ENCODE measurements at regions of chr14 and their contacts with region 1.

Region 1: DNA sequence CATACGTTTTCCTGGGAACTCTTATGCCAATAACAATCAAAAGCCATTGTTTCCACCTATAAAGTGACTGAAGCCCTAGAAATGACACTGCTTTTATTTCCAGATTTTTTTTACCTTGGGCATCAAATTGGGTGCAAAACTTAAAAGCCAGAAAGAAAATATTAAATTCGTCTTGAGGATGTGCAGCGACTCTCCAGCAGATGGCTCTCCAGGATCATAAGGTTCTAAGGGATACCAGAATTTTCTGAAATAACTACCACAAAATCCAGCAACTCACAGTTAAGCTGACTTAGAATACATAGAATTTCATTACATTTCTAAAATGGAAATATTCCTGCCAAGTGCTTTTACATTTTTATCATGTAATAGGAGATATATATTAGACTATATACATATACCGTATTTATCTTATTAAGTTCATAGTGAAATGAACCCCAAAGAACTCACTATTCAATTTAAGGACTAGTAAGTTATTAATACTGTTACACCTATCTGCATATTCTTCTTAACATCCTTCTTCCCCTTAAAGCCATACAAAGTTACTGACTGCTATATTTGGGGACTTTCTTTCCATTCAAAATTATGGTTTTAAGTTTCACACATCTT is 44.0 kb downstream of the ARMH4 start:
- DNase-seq: peak; percentile 46
- H3K4me3 ChIP-seq: no peak overlapping the region
- H3K27ac ChIP-seq: no peak overlapping the region
- H3K27me3 ChIP-seq: peaks cover 7% of the 10 kb centered on the region
- CTCF ChIP-seq: peak; percentile 91

Region 2: GRCh38 chr14:58060077-58060476 is 48.0 kb before region 1 on chr14:
- CTCF ChIA-PET with region 1: no interaction called
- POLR2A ChIA-PET with region 1: no interaction called
- DNase-seq: no peak
- H3K4me3 ChIP-seq: no peak overlapping the region
- H3K27ac ChIP-seq: no peak overlapping the region
- H3K27me3 ChIP-seq: peaks cover 2% of the 10 kb centered on the region
- CTCF ChIP-seq: no peak

Region 3: DNA sequence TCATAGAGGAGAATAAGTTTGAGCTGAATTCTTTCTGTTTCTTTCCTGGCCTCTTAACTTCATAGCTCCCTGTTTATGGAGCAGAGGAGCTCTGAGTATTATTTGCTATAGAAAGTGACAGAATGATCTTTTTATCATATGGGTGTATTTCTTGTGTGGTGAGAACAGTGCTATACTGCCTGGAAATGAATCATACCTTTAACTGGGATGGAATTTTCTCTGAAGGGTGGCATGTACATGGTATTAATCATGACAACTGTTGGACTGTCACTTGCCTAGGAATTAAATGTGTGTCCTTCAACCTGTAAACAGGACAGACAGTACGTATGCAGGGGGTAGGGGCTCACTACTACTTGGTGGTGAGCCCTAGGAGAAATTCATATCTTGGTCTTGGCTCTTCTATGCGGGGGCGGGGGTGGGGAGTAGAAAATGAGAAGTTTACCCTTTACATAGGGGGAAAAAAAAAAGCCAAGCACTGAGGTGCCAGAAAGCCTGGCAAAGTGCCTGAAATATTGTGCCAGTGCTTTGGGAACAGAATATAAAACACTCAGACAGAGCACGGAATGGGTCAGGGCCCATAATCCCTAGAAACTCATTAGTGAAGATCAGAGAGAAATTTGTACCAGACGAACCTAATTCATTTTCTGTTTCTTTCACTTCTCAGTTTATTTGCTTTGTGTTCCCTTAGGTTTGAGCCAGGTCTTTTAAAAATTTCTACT is 10.2 kb after region 1 on chr14:
- CTCF ChIA-PET with region 1: interaction called, 19 read pairs
- POLR2A ChIA-PET with region 1: no interaction called
- DNase-seq: no peak
- H3K4me3 ChIP-seq: no peak overlapping the region
- H3K27ac ChIP-seq: no peak overlapping the region
- H3K27me3 ChIP-seq: no peaks in the 10 kb centered on the region
- CTCF ChIP-seq: no peak

Region 4: DNA sequence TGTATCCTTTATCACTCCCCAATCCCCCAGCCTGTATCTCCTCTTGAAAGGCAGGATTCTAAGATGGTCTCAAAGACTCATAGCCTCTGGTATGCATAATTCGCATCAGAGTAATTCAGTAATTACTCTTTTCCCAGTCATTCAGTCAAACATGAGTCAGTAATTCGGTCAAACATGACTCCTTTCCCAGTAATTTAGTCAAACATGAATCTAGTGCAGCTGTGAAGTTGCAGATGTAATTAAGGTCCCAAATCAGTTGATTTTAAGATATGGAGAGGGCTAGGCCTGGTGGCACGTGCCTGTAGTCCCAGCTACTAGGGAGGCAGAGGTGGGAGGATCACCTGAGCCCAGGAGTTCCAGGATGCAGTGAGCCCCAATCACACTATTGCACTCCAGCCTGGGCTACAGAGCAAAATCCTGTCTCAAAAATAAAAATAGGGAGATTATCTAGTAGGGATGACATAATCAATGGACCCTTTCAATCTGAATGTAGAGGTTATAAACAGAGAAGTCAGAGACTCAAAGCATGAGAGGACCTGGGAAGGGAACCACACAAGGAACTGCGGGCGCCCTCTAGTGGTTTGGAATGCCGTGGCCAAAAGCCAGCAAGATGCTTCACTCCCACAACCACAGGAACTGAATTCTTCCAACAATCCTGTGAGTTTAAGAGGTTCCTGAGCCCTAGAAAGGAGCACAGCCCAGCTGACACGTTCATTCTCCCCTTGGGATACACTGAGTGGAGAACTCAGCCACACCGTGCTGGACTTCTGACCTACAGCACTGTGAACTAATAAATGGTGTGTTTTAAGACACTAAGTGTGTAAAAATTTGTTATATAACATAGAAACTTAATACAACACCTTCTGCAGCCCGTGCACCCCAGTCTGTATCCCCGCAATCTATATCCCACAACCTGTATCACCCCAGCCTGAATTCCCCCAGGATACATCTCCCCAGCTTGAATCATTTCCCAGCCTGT is 58.2 kb after region 1 on chr14:
- CTCF ChIA-PET with region 1: interaction called, 92 read pairs
- POLR2A ChIA-PET with region 1: no interaction called
- DNase-seq: peak; percentile 48
- H3K4me3 ChIP-seq: no peak overlapping the region
- H3K27ac ChIP-seq: no peak overlapping the region
- H3K27me3 ChIP-seq: no peaks in the 10 kb centered on the region
- CTCF ChIP-seq: peak; percentile 93

Region 5: DNA sequence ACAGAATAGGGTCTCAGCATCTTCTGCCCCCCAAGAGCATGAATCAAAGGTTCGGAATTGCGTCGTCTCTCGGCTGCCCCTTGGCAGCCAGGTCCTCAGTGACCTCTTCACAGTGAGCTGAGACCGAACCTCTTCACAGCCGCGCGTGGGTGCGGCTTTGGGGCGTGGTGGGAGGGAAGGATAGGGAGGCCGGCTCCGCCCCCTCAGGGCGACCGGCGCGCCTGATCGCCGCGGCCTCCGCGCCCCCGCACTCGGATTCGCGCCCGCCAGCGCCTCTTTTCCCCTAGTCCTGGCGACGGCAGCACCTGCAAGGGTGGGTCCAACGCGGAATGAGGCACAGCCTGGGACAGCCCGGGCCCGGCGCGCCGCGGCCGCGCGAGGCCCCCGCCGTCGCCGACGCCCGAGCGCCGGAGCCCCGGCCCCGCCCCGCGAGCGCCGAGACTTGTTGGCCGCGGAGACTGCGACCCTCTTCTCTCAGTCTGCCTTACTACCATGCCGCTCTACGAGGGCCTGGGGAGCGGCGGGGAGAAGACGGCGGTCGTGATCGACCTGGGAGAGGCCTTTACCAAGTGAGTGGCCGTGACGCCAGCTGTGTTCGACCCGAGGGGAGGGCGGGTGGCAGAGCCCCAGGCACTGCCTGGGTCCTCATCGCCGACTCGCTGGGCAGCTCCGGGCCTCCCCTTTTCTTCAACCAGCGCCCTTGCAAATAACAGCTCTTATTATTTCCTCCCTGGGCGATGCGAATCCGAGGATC is 91.9 kb after region 1 on chr14 and contains the start of gene ACTR10:
- CTCF ChIA-PET with region 1: interaction called, 14 read pairs
- POLR2A ChIA-PET with region 1: interaction called, 3 read pairs
- DNase-seq: no peak
- H3K4me3 ChIP-seq: peak within 1 kb of the TSS; percentile 87
- H3K27ac ChIP-seq: peak within 1 kb of the TSS; percentile 87
- H3K27me3 ChIP-seq: no peaks in the 10 kb centered on the region
- CTCF ChIP-seq: no peak
- polyA plus RNA-seq, gene ACTR10: 99.9 and 142 TPM in 2 replicates

Region 6: GRCh38 chr14:58216544-58216943 is 108.5 kb after region 1 on chr14:
- CTCF ChIA-PET with region 1: interaction called, 10 read pairs
- POLR2A ChIA-PET with region 1: no interaction called
- DNase-seq: no peak
- H3K4me3 ChIP-seq: no peak overlapping the region
- H3K27ac ChIP-seq: no peak overlapping the region
- H3K27me3 ChIP-seq: no peaks in the 10 kb centered on the region
- CTCF ChIP-seq: no peak

Region 7: GRCh38 chr14:58244556-58245387 is 136.7 kb after region 1 on chr14 and contains the start of gene PSMA3:
- CTCF ChIA-PET with region 1: interaction called, 10 read pairs
- POLR2A ChIA-PET with region 1: no interaction called
- DNase-seq: peak; percentile 90
- H3K4me3 ChIP-seq: peak within 1 kb of the TSS; percentile 96
- H3K27ac ChIP-seq: peak within 1 kb of the TSS; percentile 99
- H3K27me3 ChIP-seq: no peaks in the 10 kb centered on the region
- CTCF ChIP-seq: no peak; the same call in 1 of the 2 replicates
- polyA plus RNA-seq, gene PSMA3: 266 and 318 TPM in 2 replicates

Region 8: DNA sequence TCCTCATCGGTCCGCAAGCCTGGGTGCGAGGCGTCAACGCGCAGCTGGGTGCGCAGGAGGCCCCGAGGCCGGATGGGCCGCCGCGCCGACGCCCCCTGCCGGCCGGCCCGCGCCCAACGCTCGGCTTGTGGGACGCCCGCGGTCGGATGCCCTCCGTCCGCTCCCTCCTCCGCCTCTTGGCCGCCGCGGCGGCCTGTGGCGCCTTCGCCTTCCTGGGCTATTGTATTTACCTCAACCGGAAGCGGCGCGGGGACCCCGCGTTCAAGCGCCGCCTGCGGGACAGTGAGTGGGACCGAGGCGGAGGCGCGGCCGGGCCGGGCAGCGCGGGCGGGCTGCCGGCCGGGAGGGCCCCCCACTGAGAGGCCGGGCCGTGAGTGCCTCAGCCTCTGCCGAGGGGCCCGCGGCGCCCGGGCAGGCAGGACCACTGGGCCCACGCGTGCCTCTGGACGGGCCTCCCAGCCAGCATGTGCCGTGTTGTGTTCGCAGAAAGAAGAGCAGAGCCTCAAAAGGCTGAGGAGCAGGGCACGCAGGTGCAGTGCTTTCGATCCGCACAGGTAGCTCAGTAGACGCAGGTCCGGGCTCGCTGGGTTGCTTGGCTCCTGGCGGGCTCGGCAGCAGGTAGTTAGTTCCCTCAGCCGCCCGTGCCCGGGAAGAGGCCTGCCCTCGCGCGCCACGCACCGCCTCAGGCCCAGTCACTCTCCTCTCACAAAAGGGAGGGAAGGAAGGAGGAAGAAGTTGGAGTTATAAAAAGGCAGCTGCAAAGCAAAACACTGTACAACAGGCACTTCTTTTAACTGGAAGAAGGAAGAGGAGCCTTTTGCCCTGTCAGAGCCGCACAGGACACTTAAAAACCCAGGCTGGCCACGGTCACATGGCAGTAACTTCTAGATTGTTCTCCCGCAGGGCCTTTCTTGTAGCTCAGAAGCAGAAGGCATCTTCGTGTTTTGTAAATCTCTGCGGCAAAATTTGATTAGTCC is 288.1 kb after region 1 on chr14 and contains the start of gene TOMM20L:
- CTCF ChIA-PET with region 1: interaction called, 12 read pairs
- POLR2A ChIA-PET with region 1: no interaction called
- DNase-seq: peak; percentile 4
- H3K4me3 ChIP-seq: peak within 1 kb of the TSS; percentile 55
- H3K27ac ChIP-seq: no peak within 1 kb of the TSS
- H3K27me3 ChIP-seq: no peaks in the 10 kb centered on the region
- CTCF ChIP-seq: peak; percentile 48; the same call in 1 of the 2 replicates
- polyA plus RNA-seq, gene TOMM20L: not detected in 2 replicates